Endothelial cell of umbilical vein (primary cell): ENCODE measurements at regions of chr1 and their contacts with region 1.

Region 1: DNA sequence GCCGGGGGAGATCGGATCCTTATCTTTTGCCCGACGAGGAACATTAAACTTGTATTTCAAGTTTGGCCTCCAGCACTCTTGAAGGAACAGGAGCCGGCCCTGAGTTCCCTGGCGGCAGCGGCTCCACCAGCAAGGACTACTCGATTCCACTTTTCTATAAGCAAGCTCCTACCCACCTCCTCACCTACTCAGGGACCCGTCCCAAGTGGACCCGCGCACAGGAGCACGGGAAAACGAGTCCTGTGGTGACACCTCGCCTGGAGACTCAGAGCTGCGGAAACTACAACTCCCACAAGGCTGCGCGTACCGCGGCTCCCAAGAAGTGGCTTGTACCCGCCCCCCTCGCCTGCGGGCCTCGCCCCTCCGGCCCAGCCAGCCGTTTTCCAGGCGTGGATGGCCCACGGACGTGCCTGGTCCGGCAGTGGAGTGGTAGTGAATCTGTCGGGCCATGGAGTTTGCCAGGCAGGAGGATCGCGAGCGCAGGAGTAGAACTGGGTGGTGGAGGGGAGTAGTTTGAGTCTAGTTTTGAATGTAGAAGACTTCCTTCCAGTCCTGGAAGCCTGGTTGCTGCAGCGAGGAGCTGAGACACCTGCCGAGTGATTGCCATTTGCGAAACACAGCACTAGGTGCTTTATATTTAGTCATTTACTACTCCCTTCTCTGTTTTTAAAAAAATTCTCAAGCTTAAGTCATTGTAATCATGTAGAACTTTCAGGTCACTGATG is at the start of gene ACP6:
- DNase-seq: peak; percentile 97
- H3K4me3 ChIP-seq: peak within 1 kb of the TSS; percentile 57 to 79 (median 76)
- H3K27ac ChIP-seq: no peak within 1 kb of the TSS
- H3K4me1 ChIP-seq: peaks cover 13% of the 10 kb centered on the region
- H3K27me3 ChIP-seq: no peaks in the 10 kb centered on the region
- CTCF ChIP-seq: no peak
- POLR2A ChIP-seq: peak; percentile 45
- total RNA-seq, gene ACP6: 9.4 and 11.1 TPM in 2 replicates

Region 2: GRCh38 chr1:147599362-147600118 is 70.9 kb before region 1 on chr1:
- CTCF ChIA-PET with region 1: interaction called, 3 read pairs
- POLR2A ChIA-PET with region 1: no interaction called
- dilution Hi-C with region 1: no loop called
- intact Hi-C with region 1: loop called (anchors 2 kb)
- DNase-seq: peak; percentile 98
- H3K4me3 ChIP-seq: peak overlapping the region; percentile 76 to 91 (median 78)
- H3K27ac ChIP-seq: no peak overlapping the region
- H3K4me1 ChIP-seq: peaks cover 13% of the 10 kb centered on the region
- H3K27me3 ChIP-seq: peaks cover 3 to 4% of the 10 kb centered on the region in 2 experiments
- CTCF ChIP-seq: no peak
- POLR2A ChIP-seq: no peak

Region 3: GRCh38 chr1:147640553-147641165 is 29.8 kb before region 1 on chr1:
- CTCF ChIA-PET with region 1: interaction called, 6 read pairs
- POLR2A ChIA-PET with region 1: no interaction called
- dilution Hi-C with region 1: no loop called
- intact Hi-C with region 1: loop called (anchors 1 kb)
- DNase-seq: peak; percentile 60
- H3K4me3 ChIP-seq: no peak overlapping the region
- H3K27ac ChIP-seq: no peak overlapping the region
- H3K4me1 ChIP-seq: no peaks in the 10 kb centered on the region
- H3K27me3 ChIP-seq: no peaks in the 10 kb centered on the region
- CTCF ChIP-seq: peak; percentile 94 to 96
- POLR2A ChIP-seq: no peak

Region 4: DNA sequence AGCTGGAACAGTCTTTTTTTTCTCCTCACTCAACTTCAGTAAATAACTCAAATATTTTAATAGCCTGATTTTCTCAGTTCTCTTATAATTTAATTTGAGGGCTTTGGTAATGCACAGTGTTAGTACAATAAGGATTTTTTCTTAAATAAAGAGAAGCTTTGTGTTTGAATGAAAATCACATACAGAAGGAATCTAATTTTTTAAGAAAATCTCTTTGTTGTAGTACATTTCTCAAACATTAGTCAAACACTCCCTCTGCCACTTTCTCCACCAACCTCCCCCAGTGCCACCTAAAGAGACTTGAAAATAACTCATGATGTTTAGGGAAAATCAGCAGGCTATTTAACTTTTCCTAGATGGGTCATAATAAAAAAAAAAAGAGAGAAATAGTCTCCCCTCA is 42.1 kb after region 1 on chr1:
- CTCF ChIA-PET with region 1: no interaction called
- POLR2A ChIA-PET with region 1: no interaction called
- dilution Hi-C with region 1: no loop called
- intact Hi-C with region 1: no loop called
- DNase-seq: no peak
- H3K4me3 ChIP-seq: no peak overlapping the region
- H3K27ac ChIP-seq: no peak overlapping the region
- H3K4me1 ChIP-seq: no peaks in the 10 kb centered on the region
- H3K27me3 ChIP-seq: peaks cover 15 to 21% of the 10 kb centered on the region in 2 experiments
- CTCF ChIP-seq: no peak
- POLR2A ChIP-seq: no peak